ENCODE measurements at regions of chr17 and their contacts with region 1.

Region 1: GRCh38 chr17:68468334-68468733 is 11.0 kb upstream of the WIPI1 start:
- DNase-seq: no peak
- ATAC-seq: no peak
- H3K4me3 ChIP-seq: no peak overlapping the region
- H3K27ac ChIP-seq: peak overlapping the region in 1 of 2 donors; percentile 50
- H3K4me1 ChIP-seq: no peaks in the 10 kb centered on the region
- H3K27me3 ChIP-seq: no peaks in the 10 kb centered on the region

Region 2: GRCh38 chr17:68498479-68499326 is 30.4 kb after region 1 on chr17:
- intact Hi-C with region 1: no loop called
- DNase-seq: no peak
- ATAC-seq: no peak
- H3K4me3 ChIP-seq: no peak overlapping the region
- H3K27ac ChIP-seq: no peak overlapping the region
- H3K4me1 ChIP-seq: no peaks in the 10 kb centered on the region
- H3K27me3 ChIP-seq: no peaks in the 10 kb centered on the region

Region 3: DNA sequence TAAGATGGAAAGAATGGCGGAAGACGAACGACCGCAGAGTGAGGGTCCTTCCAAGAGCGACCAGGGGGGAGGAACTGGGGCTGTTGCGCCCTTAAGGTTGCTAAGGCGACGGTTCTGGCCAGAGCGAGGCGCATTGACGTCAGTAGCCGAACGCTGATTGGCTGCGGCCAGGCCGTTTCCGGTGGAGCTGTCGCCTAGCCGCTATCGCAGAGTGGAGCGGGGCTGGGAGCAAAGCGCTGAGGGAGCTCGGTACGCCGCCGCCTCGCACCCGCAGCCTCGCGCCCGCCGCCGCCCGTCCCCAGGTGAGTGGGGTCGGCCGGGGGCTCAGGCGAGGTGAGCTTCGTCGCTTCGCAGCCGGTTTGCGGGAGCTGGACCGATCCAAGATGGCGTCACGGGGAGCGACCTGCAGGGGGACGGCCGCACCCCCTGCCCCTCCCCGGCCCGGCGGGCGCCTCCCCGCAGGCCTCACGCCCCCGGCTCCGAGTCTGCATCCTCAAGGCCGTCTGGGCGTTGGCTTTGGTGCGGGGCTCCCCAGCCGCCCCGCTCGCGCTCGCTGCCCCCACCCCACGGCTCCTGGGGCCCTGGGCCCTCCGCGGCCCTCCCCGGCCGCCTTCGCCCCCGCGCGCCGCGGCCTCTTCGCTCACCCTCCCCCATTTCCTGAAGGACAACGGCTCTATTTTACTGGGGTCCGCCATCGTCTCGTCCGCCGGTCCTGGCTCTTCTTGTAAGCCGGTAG is 44.1 kb after region 1 on chr17 and contains the start of gene PRKAR1A:
- intact Hi-C with region 1: loop called (anchors 5 kb)
- DNase-seq: peak; percentile 97 to 98
- ATAC-seq: peak; percentile 97
- H3K4me3 ChIP-seq: peak within 1 kb of the TSS; percentile 68 to 89
- H3K27ac ChIP-seq: peak within 1 kb of the TSS; percentile 72 to 96
- H3K4me1 ChIP-seq: no peaks in the 10 kb centered on the region
- H3K27me3 ChIP-seq: no peaks in the 10 kb centered on the region
- total RNA-seq, gene PRKAR1A: 251 to 297 TPM